ENCODE measurements at regions of chr12 and their contacts with region 1.

Region 1: DNA sequence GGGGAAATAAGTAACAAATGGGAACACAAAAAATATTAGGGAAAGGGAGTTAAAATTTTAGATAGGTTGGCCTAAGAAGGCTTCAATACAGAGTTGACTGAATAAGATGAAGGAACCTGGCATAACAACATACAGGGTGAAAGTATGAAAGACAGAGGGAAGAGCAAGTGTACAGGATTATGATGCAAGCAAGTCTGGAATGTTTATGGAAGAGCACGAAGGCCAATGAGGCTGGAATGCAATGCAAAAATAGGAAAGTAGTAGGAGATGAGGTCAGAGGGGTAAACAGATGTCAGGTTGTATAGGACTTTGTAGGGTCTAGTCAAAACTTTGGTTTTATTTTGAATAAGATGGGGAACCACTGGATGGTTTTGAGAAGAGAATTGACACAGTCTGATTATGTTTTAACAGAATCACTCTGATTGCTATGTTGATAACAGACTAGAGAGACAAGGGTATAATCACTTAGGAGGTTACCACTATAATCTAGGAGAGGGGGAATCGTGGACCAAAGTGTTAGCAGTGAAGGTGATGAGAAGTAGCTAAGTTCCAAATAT is 96.8 kb downstream of the OSBPL8 start:
- H3K4me3 Mint-ChIP-seq: no peak overlapping the region
- H3K27ac Mint-ChIP-seq: no peak overlapping the region
- H3K4me1 Mint-ChIP-seq: peaks cover 21% of the 10 kb centered on the region
- H3K27me3 Mint-ChIP-seq: no peaks in the 10 kb centered on the region

Region 2: GRCh38 chr12:76074701-76075336 is 387.9 kb before region 1 on chr12:
- intact Hi-C with region 1: loop called (anchors 10 kb)
- H3K4me3 Mint-ChIP-seq: no peak overlapping the region
- H3K27ac Mint-ChIP-seq: no peak overlapping the region
- H3K4me1 Mint-ChIP-seq: peaks cover 21% of the 10 kb centered on the region
- H3K27me3 Mint-ChIP-seq: no peaks in the 10 kb centered on the region

Region 3: DNA sequence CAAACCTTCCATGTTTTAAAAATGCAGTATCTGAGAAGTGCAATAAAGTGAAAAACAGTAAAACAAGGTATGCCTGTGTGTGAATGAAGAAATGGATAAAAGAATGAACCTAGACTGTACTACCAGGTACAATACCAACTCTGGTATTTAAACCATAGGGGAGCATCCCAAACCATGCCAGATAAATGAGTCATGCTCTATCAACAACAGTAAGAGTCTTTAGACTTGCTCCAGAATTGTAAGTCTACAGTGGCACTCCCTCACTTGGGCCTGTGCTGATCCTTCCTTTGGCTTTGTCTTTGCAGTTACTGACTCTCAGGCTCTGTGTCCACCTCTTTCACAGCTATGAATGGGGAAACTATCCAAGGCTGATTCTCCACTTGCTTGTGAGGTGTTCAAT is 152.6 kb before region 1 on chr12:
- intact Hi-C with region 1: no loop called
- H3K4me3 Mint-ChIP-seq: no peak overlapping the region
- H3K27ac Mint-ChIP-seq: no peak overlapping the region
- H3K4me1 Mint-ChIP-seq: no peaks in the 10 kb centered on the region
- H3K27me3 Mint-ChIP-seq: peaks cover 7% of the 10 kb centered on the region